ENCODE measurements at regions of chr14 and their contacts with region 1.

Region 1: GRCh38 chr14:75088574-75089373 is 19.3 kb downstream of the ZC2HC1C start:
- DNase-seq: peak; percentile 72
- H3K4me3 Mint-ChIP-seq: no peak overlapping the region
- H3K27ac Mint-ChIP-seq: no peak overlapping the region
- H3K4me1 Mint-ChIP-seq: no peaks in the 10 kb centered on the region
- H3K27me3 Mint-ChIP-seq: no peaks in the 10 kb centered on the region
- CTCF ChIP-seq: peak; percentile 75

Region 2: GRCh38 chr14:74852927-74853514 is 235.8 kb before region 1 on chr14:
- CTCF ChIA-PET with region 1: interaction called, 10 read pairs
- POLR2A ChIA-PET with region 1: no interaction called
- intact Hi-C with region 1: no loop called
- DNase-seq: no peak
- H3K4me3 Mint-ChIP-seq: no peak overlapping the region
- H3K27ac Mint-ChIP-seq: no peak overlapping the region
- H3K4me1 Mint-ChIP-seq: peaks cover 5% of the 10 kb centered on the region
- H3K27me3 Mint-ChIP-seq: no peaks in the 10 kb centered on the region
- CTCF ChIP-seq: no peak

Region 3: GRCh38 chr14:74905375-74906142 is 183.2 kb before region 1 on chr14:
- CTCF ChIA-PET with region 1: interaction called, 28 read pairs
- POLR2A ChIA-PET with region 1: interaction called, 5 read pairs
- intact Hi-C with region 1: no loop called
- DNase-seq: peak; percentile 59
- H3K4me3 Mint-ChIP-seq: no peak overlapping the region
- H3K27ac Mint-ChIP-seq: no peak overlapping the region
- H3K4me1 Mint-ChIP-seq: no peaks in the 10 kb centered on the region
- H3K27me3 Mint-ChIP-seq: no peaks in the 10 kb centered on the region
- CTCF ChIP-seq: peak; percentile 83

Region 4: GRCh38 chr14:74963705-74964271 is 125.0 kb before region 1 on chr14:
- CTCF ChIA-PET with region 1: interaction called, 11 read pairs
- POLR2A ChIA-PET with region 1: no interaction called
- intact Hi-C with region 1: no loop called
- DNase-seq: peak; percentile 38
- H3K4me3 Mint-ChIP-seq: no peak overlapping the region
- H3K27ac Mint-ChIP-seq: no peak overlapping the region
- H3K4me1 Mint-ChIP-seq: peaks cover 18% of the 10 kb centered on the region
- H3K27me3 Mint-ChIP-seq: no peaks in the 10 kb centered on the region
- CTCF ChIP-seq: no peak

Region 5: GRCh38 chr14:75063407-75064213 is 25.2 kb before region 1 on chr14 and contains the start of gene ACYP1:
- CTCF ChIA-PET with region 1: interaction called, 11 read pairs
- POLR2A ChIA-PET with region 1: interaction called, 3 read pairs
- intact Hi-C with region 1: no loop called
- DNase-seq: peak; percentile 90
- H3K4me3 Mint-ChIP-seq: peak within 1 kb of the TSS; percentile 100
- H3K27ac Mint-ChIP-seq: peak within 1 kb of the TSS; percentile 97
- H3K4me1 Mint-ChIP-seq: peaks cover 4% of the 10 kb centered on the region
- H3K27me3 Mint-ChIP-seq: no peaks in the 10 kb centered on the region
- CTCF ChIP-seq: no peak
- total RNA-seq, gene ACYP1: 11.7 and 19.9 TPM in 2 replicates

Region 6: DNA sequence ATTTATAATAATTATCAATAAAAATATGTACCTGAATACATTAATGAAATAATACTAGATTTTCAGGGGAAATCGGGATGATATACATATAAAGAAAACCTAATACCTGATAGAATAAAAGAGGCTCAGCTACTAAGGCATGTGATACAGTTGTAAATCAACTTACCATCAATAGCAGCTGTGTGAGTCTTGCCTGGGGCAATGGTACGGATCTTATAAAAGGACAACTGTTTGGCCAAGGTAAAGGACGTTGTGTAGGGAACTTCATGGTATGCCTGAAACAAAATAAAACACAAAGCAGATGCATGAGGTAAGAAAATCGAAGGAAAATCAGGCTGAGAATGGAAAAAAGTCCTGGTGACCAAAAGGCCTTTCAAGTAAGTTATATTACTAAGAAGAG is 12.7 kb after region 1 on chr14:
- CTCF ChIA-PET with region 1: interaction called, 49 read pairs
- POLR2A ChIA-PET with region 1: no interaction called
- intact Hi-C with region 1: no loop called
- DNase-seq: no peak
- H3K4me3 Mint-ChIP-seq: no peak overlapping the region
- H3K27ac Mint-ChIP-seq: no peak overlapping the region
- H3K4me1 Mint-ChIP-seq: no peaks in the 10 kb centered on the region
- H3K27me3 Mint-ChIP-seq: no peaks in the 10 kb centered on the region
- CTCF ChIP-seq: no peak

Measured in MCF 10A (cell line).